ENCODE measurements at regions of chr15 and their contacts with region 1.

Region 1: GRCh38 chr15:40108855-40109735 is at the start of gene BMF:
- DNase-seq: peak; percentile 84
- ATAC-seq: peak; percentile 60
- H3K4me3 ChIP-seq: peak within 1 kb of the TSS; percentile 73
- H3K27ac ChIP-seq: peak within 1 kb of the TSS; percentile 96
- H3K4me1 ChIP-seq: peaks cover 54% of the 10 kb centered on the region
- H3K27me3 ChIP-seq: no peaks in the 10 kb centered on the region
- CTCF ChIP-seq: peak in 2 of 3 experiments; percentile 19 to 39; a peak in 3 of 6 replicates
- EP300 ChIP-seq: 0 out of 4 replicates have a peak, but pooled peaks of 1 of the 2 experiments have one; percentile 21
- POLR2A ChIP-seq: peak; percentile 49; the same call in 1 of the 2 replicates
- RAD21 ChIP-seq: peak; percentile 33
- polyA plus RNA-seq, gene BMF: 0.82 to 1.3 TPM

Region 2: DNA sequence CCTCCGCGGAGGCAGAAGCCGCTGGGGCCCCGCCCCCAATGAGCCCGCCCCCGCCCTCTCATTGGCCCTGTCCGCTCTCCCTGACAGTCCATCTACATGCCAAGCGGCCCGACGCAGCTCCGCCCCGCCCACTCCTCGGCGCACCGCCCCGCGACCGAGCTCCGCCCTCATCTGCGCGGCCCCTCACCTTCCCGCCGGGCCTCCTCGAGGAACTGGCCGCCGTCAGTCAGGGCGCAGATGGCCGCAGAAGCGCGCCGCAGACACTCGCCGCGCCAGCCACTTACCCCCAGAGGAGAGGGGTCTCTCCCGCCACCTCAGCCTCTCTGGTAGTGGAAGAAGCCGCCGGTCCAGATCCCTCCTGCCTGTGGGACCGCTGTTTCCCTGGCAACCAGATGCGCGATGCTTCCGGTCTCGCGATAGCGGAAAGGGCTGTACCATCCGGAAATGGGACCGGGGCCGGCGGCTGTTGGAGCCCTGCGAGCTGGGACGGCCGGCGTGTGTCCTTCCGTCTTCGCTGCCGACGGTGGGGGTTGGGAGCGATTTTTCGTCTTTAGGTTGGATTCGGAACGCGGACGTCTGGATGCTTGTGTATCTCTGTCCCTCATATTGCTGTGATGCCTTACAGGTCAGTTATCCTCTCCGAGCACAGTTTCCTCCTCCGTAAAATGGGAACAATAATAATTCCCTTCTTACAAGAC is 326.5 kb before region 1 on chr15 and contains the start of gene FSIP1:
- CTCF ChIA-PET with region 1: interaction called, 17 read pairs
- POLR2A ChIA-PET with region 1: no interaction called
- RAD21 ChIA-PET with region 1: interaction called, 8 read pairs
- SMC1A ChIA-PET with region 1: interaction called, 11 read pairs
- in situ Hi-C with region 1: loop called (anchors 10 kb)
- intact Hi-C with region 1: loop called (anchors 5 kb)
- DNase-seq: peak; percentile 86
- ATAC-seq: peak; percentile 98
- H3K4me3 ChIP-seq: peak within 1 kb of the TSS; percentile 97
- H3K27ac ChIP-seq: peak within 1 kb of the TSS; percentile 93
- H3K4me1 ChIP-seq: peaks cover 7% of the 10 kb centered on the region
- H3K27me3 ChIP-seq: no peaks in the 10 kb centered on the region
- CTCF ChIP-seq: no peak
- EP300 ChIP-seq: peak in 1 of 2 experiments; percentile 27; a peak in 1 of 4 replicates
- POLR2A ChIP-seq: peak; percentile 93
- RAD21 ChIP-seq: no peak
- polyA plus RNA-seq, gene FSIP1: 0.15 to 0.27 TPM

Region 3: GRCh38 chr15:39934397-39935071 is 174.6 kb before region 1 on chr15:
- CTCF ChIA-PET with region 1: interaction called, 8 read pairs
- POLR2A ChIA-PET with region 1: interaction called, 3 read pairs
- RAD21 ChIA-PET with region 1: interaction called, 4 read pairs
- SMC1A ChIA-PET with region 1: interaction called, 4 read pairs
- in situ Hi-C with region 1: loop called (anchors 10 kb)
- intact Hi-C with region 1: loop called (anchors 10 kb)
- DNase-seq: no peak
- ATAC-seq: peak; percentile 32
- H3K4me3 ChIP-seq: peak overlapping the region; percentile 80
- H3K27ac ChIP-seq: peak overlapping the region; percentile 80
- H3K4me1 ChIP-seq: peaks cover 7% of the 10 kb centered on the region; the same call in 1 of the 2 replicates
- H3K27me3 ChIP-seq: no peaks in the 10 kb centered on the region
- CTCF ChIP-seq: no peak
- EP300 ChIP-seq: no peak
- POLR2A ChIP-seq: no peak
- RAD21 ChIP-seq: no peak

Region 4: DNA sequence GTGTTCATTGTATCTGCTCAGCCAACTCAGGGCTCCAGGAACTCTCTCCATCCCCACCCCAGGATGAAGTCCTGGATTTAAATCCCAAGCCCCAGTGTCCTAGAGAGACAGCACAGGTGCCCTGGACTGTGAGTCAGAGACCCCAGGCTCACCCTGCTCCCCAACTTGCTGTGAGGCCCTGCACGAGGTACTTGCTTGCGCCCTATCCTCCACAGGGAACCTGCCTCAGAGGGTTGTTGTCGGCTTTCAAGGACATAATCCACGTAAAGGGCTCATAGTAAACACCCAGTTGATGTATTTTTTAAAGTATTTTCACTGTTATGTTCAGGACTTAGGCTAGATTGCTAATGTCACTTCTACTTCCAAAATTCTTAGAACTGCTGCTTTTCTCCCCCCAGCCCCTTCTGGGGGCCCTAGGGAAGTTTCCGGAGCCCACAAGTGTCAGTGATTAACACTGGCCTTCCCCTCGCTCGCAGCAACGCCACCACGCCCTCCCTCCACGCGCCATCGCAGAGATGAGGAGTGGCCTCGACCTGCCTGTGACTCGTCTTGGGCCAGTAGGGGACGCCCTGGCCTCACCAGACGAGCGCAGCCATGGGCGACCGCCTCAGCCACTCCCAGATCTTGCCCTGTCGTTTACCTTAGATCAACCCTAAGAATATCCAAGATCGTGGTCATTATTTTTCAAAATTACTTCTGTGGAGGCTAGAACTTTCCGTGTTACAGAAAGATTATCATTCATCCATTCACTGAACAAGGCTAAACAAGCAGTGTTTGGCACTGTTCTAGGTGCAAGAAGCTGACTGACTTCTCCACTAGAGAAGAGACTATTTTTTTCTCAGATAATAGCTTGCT is 64.2 kb before region 1 on chr15:
- CTCF ChIA-PET with region 1: interaction called, 776 read pairs
- POLR2A ChIA-PET with region 1: interaction called, 307 read pairs
- RAD21 ChIA-PET with region 1: interaction called, 903 read pairs
- SMC1A ChIA-PET with region 1: interaction called, 1,082 read pairs
- in situ Hi-C with region 1: loop called (anchors 10 kb)
- intact Hi-C with region 1: loop called (anchors 1 kb)
- DNase-seq: no peak
- ATAC-seq: peak; percentile 86
- H3K4me3 ChIP-seq: no peak overlapping the region
- H3K27ac ChIP-seq: peak overlapping the region; percentile 92
- H3K4me1 ChIP-seq: peaks cover 67% of the 10 kb centered on the region
- H3K27me3 ChIP-seq: no peaks in the 10 kb centered on the region
- CTCF ChIP-seq: peak; percentile 97 to 100 (median 98); a peak in 5 of 6 replicates
- EP300 ChIP-seq: peak in 1 of 2 experiments; percentile 26; a peak in 1 of 4 replicates
- POLR2A ChIP-seq: no peak
- RAD21 ChIP-seq: peak; percentile 93

Region 5: DNA sequence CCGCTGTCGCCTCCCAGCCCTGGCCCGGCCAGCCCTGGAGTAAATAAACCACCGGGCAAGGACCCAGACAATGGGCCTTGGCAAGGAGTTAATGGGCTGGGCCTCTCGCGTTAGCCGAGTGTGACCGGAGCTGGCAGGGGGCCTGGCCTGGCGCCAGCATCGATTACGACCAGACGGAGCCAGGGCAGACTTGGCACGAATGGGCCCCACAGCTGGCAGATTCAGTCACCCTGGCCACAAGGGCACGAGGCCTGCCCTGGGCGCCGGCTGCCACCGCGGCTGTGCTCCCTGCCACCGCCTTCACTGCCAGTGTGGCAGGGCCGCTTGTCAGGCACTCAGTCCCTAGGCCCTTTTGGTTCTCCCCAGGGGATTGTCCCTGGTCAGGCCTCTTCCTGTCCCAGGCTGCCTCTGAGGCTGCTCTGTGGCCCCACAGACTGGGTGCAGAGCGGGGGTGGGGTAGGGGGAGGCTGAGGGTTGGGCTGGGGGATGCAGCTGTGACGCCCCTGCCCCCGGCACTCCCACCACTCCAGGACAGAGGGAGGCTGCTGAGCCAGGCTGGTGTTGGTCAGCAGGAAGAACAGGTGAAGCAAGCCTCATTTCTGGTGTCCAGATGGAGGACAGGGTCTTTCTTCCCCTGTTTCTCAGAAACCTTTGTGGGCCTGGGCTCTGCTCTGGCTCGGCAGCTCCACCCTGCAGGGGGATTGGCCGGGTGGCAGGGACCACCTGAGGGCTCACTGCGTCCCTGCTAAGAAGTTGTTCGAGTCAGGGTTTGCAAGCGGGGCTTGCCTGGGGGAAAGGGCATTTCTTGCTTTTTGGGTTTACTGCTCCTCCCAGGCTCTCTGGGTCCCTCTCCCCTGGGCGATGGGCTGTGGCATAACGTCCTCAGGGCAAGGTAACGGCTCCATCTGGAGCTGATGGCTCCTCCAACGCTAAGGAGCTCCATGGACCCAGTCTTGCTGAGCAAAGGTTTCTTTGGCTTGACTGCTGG is 39.6 kb before region 1 on chr15:
- CTCF ChIA-PET with region 1: interaction called, 578 read pairs
- POLR2A ChIA-PET with region 1: interaction called, 208 read pairs
- RAD21 ChIA-PET with region 1: interaction called, 509 read pairs
- SMC1A ChIA-PET with region 1: interaction called, 981 read pairs
- in situ Hi-C with region 1: no loop called
- intact Hi-C with region 1: loop called (anchors 2 kb)
- DNase-seq: no peak
- ATAC-seq: peak; percentile 88
- H3K4me3 ChIP-seq: no peak overlapping the region; the same call in 1 of the 2 replicates
- H3K27ac ChIP-seq: peak overlapping the region; percentile 66
- H3K4me1 ChIP-seq: peaks cover 36% of the 10 kb centered on the region
- H3K27me3 ChIP-seq: no peaks in the 10 kb centered on the region
- CTCF ChIP-seq: no peak
- EP300 ChIP-seq: no peak
- POLR2A ChIP-seq: peak; percentile 79
- RAD21 ChIP-seq: no peak

Region 6: GRCh38 chr15:40098489-40099261 is 10.4 kb before region 1 on chr15:
- CTCF ChIA-PET with region 1: interaction called, 126 read pairs
- POLR2A ChIA-PET with region 1: interaction called, 66 read pairs
- RAD21 ChIA-PET with region 1: interaction called, 111 read pairs
- SMC1A ChIA-PET with region 1: interaction called, 981 read pairs
- in situ Hi-C with region 1: no loop called
- intact Hi-C with region 1: no loop called
- DNase-seq: peak; percentile 84
- ATAC-seq: peak; percentile 80
- H3K4me3 ChIP-seq: peak overlapping the region; percentile 46
- H3K27ac ChIP-seq: peak overlapping the region; percentile 100
- H3K4me1 ChIP-seq: peaks cover 97% of the 10 kb centered on the region
- H3K27me3 ChIP-seq: no peaks in the 10 kb centered on the region
- CTCF ChIP-seq: no peak
- EP300 ChIP-seq: peak; percentile 98 to 99
- POLR2A ChIP-seq: peak; percentile 73
- RAD21 ChIP-seq: no peak

Region 7: DNA sequence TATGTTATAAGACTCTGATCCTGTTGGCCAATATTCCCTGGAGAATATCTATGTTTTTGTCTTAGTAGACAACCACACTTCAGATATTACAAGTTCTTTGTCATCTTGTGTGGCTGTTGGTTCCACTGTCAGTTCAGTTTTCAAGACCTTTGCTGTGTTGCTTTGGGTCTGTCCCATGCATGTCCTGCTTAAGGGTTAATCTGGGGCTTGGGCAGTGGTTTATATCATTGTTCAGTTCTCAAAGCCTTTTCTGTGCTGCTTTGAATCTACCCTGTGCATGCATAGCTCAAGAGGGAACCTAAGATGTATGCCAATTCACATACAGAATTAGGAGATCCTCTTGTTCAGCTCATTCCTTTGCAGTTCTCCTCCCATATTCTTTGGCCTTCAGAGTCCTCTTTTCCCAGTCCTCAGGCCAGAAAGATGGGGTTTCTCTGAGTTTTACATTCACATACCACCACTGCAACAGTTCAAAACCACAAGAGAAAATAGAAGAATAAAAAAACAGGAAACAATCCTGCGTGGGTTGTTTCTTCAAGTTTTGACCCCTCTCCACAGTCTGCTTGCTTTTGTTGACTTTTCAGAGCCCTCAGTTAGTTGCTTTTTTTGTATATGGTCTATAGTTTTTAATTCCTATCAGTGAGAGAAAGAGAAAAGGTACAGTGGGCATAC is 73.4 kb after region 1 on chr15:
- CTCF ChIA-PET with region 1: interaction called, 18 read pairs
- POLR2A ChIA-PET with region 1: interaction called, 11 read pairs
- RAD21 ChIA-PET with region 1: interaction called, 20 read pairs
- SMC1A ChIA-PET with region 1: interaction called, 23 read pairs
- in situ Hi-C with region 1: no loop called
- intact Hi-C with region 1: no loop called
- DNase-seq: no peak
- ATAC-seq: peak; percentile 73
- H3K4me3 ChIP-seq: no peak overlapping the region; the same call in 1 of the 2 replicates
- H3K27ac ChIP-seq: peak overlapping the region; percentile 39
- H3K4me1 ChIP-seq: peaks cover 19% of the 10 kb centered on the region
- H3K27me3 ChIP-seq: no peaks in the 10 kb centered on the region
- CTCF ChIP-seq: no peak
- EP300 ChIP-seq: no peak
- POLR2A ChIP-seq: no peak
- RAD21 ChIP-seq: no peak